GM23248 (cell line): ENCODE measurements at regions of chr1 and their contacts with region 1.

Region 1: DNA sequence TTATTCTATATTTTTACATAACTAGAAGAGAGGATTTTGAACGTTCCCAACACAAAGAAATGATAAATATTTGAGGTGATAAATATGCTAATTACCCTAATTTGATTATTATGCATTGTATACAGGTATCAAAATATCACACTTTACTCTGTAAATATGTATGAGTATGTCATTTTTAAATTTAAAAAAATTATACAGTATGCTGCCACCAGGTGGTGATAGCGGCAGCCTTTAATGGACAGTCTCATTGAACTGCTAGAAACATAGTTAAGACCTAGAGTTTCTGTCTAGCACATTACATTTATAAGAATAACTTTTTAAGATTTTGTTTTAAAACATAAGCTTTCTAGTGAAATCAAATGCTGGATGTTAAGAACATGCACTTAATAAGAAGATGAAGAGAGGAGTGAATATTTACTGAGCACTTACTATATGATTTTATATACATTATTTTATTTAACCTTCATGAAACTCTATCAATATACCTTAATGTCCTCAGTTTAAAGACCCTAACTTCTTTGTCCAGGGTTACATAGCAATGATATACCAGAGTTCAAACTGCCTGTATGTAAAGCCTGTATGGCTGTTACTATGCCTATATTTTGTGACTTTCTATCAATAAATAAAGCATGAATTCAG is 207.1 kb downstream of the NUF2 start:
- DNase-seq: peak; percentile 58
- H3K4me3 ChIP-seq: no peak overlapping the region
- H3K27ac ChIP-seq: no peak overlapping the region
- H3K4me1 ChIP-seq: no peaks in the 10 kb centered on the region
- H3K27me3 ChIP-seq: no peaks in the 10 kb centered on the region

Region 2: DNA sequence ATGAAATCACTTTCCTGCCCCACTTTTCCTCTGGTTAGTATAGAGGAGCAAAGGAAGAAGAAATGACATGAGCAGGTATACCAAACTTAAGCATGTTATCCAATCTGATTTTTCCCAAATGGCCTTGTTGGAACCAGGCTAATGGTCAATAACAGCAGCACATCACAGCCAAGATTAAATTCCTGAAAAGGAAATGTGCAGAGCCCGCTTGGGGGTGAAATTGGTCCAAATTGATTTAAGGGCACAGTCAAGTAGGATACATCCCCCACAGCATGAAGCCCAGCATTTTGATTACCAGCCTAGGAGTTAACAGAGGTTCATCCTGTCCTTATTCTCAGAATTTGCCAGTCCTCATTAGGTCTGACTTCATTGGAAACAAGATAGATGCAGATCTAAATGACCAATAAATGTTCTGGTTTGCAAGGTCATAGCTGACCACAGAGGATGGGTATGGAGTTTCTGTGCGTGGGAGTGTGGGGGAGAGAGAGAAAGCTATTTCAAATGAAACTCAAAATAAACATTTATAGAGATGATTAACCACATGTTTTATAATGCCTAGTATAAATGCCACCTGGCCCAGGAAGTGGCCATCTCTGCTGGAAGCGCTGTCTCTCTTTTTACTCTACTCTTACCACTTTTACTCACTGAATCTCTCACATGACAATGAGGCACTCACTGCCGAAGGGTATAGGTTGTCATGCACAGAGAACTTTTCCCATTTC is 364.8 kb before region 1 on chr1:
- in situ Hi-C with region 1: no loop called
- DNase-seq: peak; percentile 34
- H3K4me3 ChIP-seq: no peak overlapping the region
- H3K27ac ChIP-seq: no peak overlapping the region
- H3K4me1 ChIP-seq: peaks cover 43% of the 10 kb centered on the region
- H3K27me3 ChIP-seq: no peaks in the 10 kb centered on the region

Region 3: GRCh38 chr1:163186862-163187261 is 342.0 kb before region 1 on chr1:
- in situ Hi-C with region 1: no loop called
- DNase-seq: no peak
- H3K4me3 ChIP-seq: no peak overlapping the region
- H3K27ac ChIP-seq: no peak overlapping the region
- H3K4me1 ChIP-seq: no peaks in the 10 kb centered on the region
- H3K27me3 ChIP-seq: no peaks in the 10 kb centered on the region

Region 4: DNA sequence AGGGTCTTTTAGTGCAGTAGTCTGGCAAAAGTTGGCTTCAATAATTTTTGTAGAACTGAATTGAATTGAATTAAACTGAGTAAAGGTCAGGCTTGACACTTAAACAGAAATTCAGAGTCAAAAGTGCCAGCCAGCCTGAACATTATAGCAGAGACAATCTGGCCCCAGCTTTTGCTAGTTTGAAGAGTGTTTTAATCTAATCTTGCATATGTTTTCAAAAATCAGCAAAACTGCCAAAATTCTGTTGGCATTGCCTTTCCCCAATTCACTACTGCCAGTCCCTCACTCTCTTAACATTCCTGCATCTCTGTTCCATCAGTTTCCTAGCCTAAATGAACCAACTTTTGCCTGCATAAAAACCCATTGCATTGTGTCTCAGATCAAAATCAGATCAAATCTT is 196.7 kb after region 1 on chr1:
- in situ Hi-C with region 1: no loop called
- DNase-seq: no peak
- H3K4me3 ChIP-seq: no peak overlapping the region
- H3K27ac ChIP-seq: no peak overlapping the region
- H3K4me1 ChIP-seq: no peaks in the 10 kb centered on the region
- H3K27me3 ChIP-seq: no peaks in the 10 kb centered on the region

Region 5: GRCh38 chr1:164617377-164618201 is 1088.8 kb after region 1 on chr1:
- in situ Hi-C with region 1: loop called (anchors 25 kb)
- DNase-seq: peak; percentile 59
- H3K4me3 ChIP-seq: no peak overlapping the region
- H3K27ac ChIP-seq: no peak overlapping the region
- H3K4me1 ChIP-seq: peaks cover 12% of the 10 kb centered on the region; the same call in 1 of the 2 replicates
- H3K27me3 ChIP-seq: no peaks in the 10 kb centered on the region

Region 6: DNA sequence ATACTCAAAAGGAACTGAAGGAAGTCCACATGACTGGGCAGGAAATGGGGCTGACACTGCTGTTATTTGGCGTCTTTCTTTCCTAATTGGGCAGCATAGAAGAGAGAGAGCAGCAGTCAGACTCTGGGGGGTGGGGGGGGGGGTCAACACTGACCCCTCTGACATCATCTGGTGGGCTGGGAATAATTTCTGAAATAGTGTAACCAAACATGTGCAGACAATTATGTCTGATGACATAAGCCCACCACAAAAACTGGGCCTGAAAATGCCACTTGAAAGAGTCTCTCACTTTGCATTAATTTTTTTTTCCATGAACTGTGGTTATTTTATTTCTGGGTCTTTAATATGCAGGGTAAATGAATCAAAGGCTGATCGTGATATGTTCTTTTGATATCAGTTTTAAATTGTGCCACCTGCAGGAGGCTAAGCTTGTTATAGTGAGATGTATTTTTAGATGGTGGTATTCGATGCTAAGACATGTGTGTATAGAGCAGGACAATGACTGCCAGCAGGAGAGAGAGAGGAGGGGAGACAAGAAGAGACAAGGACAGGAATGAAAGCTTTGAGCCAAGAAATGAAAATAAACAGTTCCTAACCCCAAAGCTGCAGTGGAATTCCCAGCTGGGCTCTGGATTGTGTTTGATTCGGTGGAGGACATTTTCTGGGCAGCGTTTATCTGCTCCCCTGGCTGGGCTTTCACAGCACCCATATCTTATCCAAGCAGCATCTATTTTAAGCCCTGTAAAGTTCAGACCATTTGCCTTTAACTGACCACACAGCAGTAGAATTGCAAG is 1294.9 kb after region 1 on chr1:
- in situ Hi-C with region 1: loop called (anchors 25 kb)
- DNase-seq: peak; percentile 3
- H3K4me3 ChIP-seq: no peak overlapping the region
- H3K27ac ChIP-seq: no peak overlapping the region
- H3K4me1 ChIP-seq: no peaks in the 10 kb centered on the region
- H3K27me3 ChIP-seq: no peaks in the 10 kb centered on the region

Region 7: DNA sequence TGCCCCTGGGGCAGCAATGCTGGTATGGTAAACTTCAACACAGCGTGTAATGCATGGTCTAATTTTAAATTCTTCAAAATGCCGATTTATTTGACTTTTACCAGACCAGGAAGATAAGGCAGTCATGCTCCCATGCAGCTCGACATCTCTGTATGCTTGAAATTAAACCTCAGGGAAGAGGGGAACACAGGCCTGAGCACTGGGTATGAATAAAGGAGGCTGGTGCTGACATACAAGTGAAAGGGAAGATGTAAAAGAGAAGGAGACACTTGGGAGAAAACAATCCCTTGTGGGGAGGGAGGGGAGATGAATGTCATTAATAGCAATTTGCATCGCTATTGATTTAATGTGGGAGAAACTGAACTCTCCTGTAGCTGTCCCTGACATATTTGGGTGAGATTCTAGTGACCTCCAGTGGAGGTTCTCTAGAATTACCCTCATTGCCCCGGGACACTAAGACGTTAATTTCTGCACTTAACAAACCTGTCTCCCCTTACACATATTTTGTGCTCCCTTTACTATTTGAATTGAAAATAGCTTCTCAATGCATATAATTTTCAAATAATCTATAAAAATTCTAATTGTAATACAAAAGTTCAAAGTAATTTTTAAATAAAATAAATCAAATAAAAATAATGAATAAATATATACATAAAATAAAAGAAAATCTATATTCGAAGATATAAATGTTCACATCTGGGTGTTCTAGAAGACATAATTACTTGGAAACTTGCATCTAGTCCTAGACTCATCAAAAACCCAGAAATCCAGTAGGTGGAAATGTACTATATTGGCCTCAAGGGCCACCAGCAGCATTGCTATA is 1544.6 kb after region 1 on chr1:
- in situ Hi-C with region 1: loop called (anchors 25 kb)
- DNase-seq: peak; percentile 74
- H3K4me3 ChIP-seq: no peak overlapping the region
- H3K27ac ChIP-seq: no peak overlapping the region
- H3K4me1 ChIP-seq: peaks cover 11% of the 10 kb centered on the region; the same call in 1 of the 2 replicates
- H3K27me3 ChIP-seq: no peaks in the 10 kb centered on the region